ENCODE measurements at regions of chr4 and their contacts with region 1.

Region 1: GRCh38 chr4:150242820-150243458 is 164.7 kb downstream of the DCLK2 start:
- DNase-seq: peak; percentile 19 to 37
- ATAC-seq: peak; percentile 47 to 70; a peak in 3 of 6 replicates
- H3K4me3 ChIP-seq: no peak overlapping the region
- H3K27ac ChIP-seq: peak overlapping the region; percentile 10 to 73; a peak in 4 of 6 replicates
- H3K4me1 ChIP-seq: peaks cover 41% of the 10 kb centered on the region
- CTCF ChIP-seq: peak; percentile 75
- EP300 ChIP-seq: no peak
- POLR2A ChIP-seq: no peak
- RAD21 ChIP-seq: peak; percentile 79 to 81

Region 2: DNA sequence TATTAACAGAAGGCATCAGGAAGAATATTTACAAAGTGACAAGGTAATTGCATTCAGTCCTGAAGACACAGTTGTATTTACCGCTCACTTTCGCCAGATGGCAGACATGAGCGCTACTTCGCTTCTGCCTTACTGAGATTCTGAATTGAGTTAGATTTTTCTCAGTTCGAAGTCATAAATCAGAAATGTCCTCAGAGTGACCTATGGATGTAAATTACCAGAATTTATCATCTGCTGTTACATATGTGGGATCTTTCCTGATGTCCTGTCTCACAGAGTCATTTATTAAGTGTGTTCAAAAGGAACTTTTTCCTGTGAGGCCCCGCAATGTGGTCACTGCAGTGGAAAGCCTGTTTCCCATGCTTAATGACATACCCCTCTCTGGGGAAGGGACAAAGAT is 262.0 kb before region 1 on chr4:
- CTCF ChIA-PET with region 1: interaction called, 11 read pairs
- POLR2A ChIA-PET with region 1: no interaction called
- DNase-seq: peak; percentile 25 to 59
- ATAC-seq: peak in 1 of 2 experiments; percentile 77; a peak in 4 of 6 replicates
- H3K4me3 ChIP-seq: no peak overlapping the region
- H3K27ac ChIP-seq: no peak overlapping the region
- H3K4me1 ChIP-seq: no peaks in the 10 kb centered on the region
- CTCF ChIP-seq: peak; percentile 72
- EP300 ChIP-seq: no peak
- POLR2A ChIP-seq: no peak
- RAD21 ChIP-seq: peak; percentile 72 to 78

Region 3: GRCh38 chr4:149999485-150000074 is 243.4 kb before region 1 on chr4:
- CTCF ChIA-PET with region 1: interaction called, 19 read pairs
- POLR2A ChIA-PET with region 1: no interaction called
- DNase-seq: peak; percentile 36 to 77
- ATAC-seq: peak; percentile 60 to 65; a peak in 3 of 6 replicates
- H3K4me3 ChIP-seq: no peak overlapping the region
- H3K27ac ChIP-seq: peak overlapping the region; percentile 28 to 88; a peak in 5 of 6 replicates
- H3K4me1 ChIP-seq: peaks cover 58% of the 10 kb centered on the region
- CTCF ChIP-seq: peak; percentile 82
- EP300 ChIP-seq: no peak
- POLR2A ChIP-seq: no peak
- RAD21 ChIP-seq: peak; percentile 89 to 95

Region 4: DNA sequence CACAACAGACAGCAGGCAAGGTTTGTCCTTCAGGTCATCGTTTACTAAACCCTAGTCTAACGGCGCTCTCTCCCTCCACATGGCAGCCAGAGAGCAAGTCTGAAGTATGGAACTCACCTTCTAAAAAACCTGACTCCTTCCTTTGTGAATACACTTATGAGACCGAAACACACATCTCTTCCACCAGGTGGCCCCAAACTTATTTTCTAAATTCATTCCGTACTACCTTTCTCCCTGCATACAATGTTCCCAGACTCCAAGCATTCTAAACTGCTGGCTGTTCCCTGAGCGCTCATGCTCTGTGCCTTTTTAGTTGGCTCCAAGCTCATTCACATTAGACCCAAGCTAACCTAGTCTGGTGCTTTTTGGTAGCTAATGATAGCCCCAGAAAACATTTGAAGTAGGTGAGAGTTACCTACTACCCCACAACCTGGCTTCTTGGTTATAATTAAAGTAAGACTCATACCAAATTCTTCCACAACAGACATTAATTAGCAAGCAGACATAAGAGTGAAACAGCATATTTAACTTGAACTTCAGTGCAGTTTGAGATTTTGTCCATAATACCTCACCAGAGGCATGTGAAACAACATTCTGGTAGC is 232.3 kb before region 1 on chr4:
- CTCF ChIA-PET with region 1: interaction called, 40 read pairs
- POLR2A ChIA-PET with region 1: no interaction called
- DNase-seq: peak; percentile 31 to 78
- ATAC-seq: peak; percentile 90 to 92
- H3K4me3 ChIP-seq: no peak overlapping the region
- H3K27ac ChIP-seq: peak overlapping the region; percentile 64 to 83
- H3K4me1 ChIP-seq: peaks cover 46% of the 10 kb centered on the region
- CTCF ChIP-seq: peak; percentile 59
- EP300 ChIP-seq: no peak
- POLR2A ChIP-seq: no peak
- RAD21 ChIP-seq: peak; percentile 70 to 74

Region 5: DNA sequence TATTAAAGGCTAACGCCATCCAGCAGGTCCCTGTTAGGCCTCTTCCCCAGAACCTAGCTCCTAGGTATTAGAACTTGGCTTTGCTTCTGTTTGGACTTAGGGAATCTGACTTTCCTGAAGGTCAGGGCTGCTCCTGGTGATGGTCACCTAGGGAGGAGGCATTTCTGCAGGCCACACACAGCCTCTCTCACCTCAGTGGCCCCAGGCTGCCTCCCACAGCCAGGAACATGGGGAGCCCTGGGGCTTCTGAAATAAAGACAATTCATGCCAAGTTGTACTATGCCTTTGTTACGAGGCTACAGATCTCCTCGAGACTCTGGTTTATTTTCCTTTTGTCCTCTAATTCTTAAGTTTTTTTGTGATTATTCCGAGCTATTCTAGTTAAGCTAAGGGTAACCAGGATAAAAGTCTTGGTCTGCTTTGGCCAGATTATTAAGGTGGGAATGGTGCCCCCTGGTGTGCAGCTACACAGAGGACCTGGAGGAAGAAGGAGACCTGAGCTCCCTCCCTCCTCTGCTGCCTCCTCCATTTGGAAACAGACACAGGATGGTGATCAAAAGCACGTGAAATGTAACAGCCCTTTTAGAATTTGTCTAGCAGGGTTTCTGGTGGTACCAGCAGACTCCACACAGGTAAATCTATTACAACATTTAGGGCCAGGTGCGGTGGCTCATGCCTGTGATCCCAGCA is 33.7 kb before region 1 on chr4:
- CTCF ChIA-PET with region 1: interaction called, 11 read pairs
- POLR2A ChIA-PET with region 1: no interaction called
- DNase-seq: peak; percentile 52 to 69
- ATAC-seq: peak; percentile 77 to 91
- H3K4me3 ChIP-seq: no peak overlapping the region
- H3K27ac ChIP-seq: peak overlapping the region in 1 of 2 experiments; percentile 29; a peak in 2 of 6 replicates
- H3K4me1 ChIP-seq: peaks cover 45% of the 10 kb centered on the region
- CTCF ChIP-seq: peak; percentile 49
- EP300 ChIP-seq: no peak
- POLR2A ChIP-seq: no peak
- RAD21 ChIP-seq: peak; percentile 62 to 65

Region 6: GRCh38 chr4:150217192-150217591 is 25.7 kb before region 1 on chr4:
- CTCF ChIA-PET with region 1: interaction called, 30 read pairs
- POLR2A ChIA-PET with region 1: no interaction called
- DNase-seq: peak in 1 of 2 experiments; percentile 68
- ATAC-seq: peak; percentile 85 to 87
- H3K4me3 ChIP-seq: no peak overlapping the region
- H3K27ac ChIP-seq: peak overlapping the region; percentile 62 to 70; a peak in 5 of 6 replicates
- H3K4me1 ChIP-seq: peaks cover 61% of the 10 kb centered on the region
- CTCF ChIP-seq: peak; percentile 53
- EP300 ChIP-seq: no peak
- POLR2A ChIP-seq: no peak
- RAD21 ChIP-seq: peak; percentile 65 to 69

Region 7: GRCh38 chr4:150224896-150225591 is 17.9 kb before region 1 on chr4:
- CTCF ChIA-PET with region 1: interaction called, 10 read pairs
- POLR2A ChIA-PET with region 1: interaction called, 7 read pairs
- DNase-seq: peak; percentile 25 to 88
- ATAC-seq: peak; percentile 97
- H3K4me3 ChIP-seq: no peak overlapping the region
- H3K27ac ChIP-seq: peak overlapping the region; percentile 70 to 84
- H3K4me1 ChIP-seq: peaks cover 67% of the 10 kb centered on the region
- CTCF ChIP-seq: no peak
- EP300 ChIP-seq: peak in 1 of 2 experiments; percentile 54; a peak in 1 of 5 replicates
- POLR2A ChIP-seq: no peak
- RAD21 ChIP-seq: no peak

Measured in A549 (cell line).